ENCODE measurements at regions of chr10 and their contacts with region 1.

Region 1: DNA sequence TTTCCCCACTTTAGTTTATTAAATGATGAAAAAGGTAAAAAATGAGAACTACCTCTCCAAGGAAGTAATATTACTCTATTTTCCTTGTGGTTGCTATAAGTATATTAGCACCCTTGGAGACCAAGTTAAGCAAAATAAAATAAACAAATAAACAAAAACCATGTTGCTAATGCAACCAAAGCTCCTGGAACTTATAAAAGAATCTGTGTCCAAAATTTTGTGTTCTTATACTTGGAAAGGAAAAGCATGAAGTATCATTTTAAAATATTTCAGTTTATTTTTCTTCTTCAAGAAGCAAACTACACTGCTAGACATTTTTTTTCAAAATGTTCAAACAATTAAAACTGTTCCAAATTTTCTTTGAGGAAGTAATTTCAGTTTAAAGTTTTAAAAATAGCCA is 441.9 kb upstream of the LRRTM3 start:
- DNase-seq: no peak
- H3K4me3 ChIP-seq: no peak overlapping the region
- H3K27ac ChIP-seq: no peak overlapping the region
- H3K4me1 ChIP-seq: no peaks in the 10 kb centered on the region
- H3K27me3 ChIP-seq: no peaks in the 10 kb centered on the region
- CTCF ChIP-seq: no peak
- POLR2A ChIP-seq: no peak

Region 2: GRCh38 chr10:65762311-65762710 is 721.7 kb before region 1 on chr10:
- intact Hi-C with region 1: loop called (anchors 5 kb)
- DNase-seq: no peak
- H3K4me3 ChIP-seq: no peak overlapping the region
- H3K27ac ChIP-seq: no peak overlapping the region
- H3K4me1 ChIP-seq: no peaks in the 10 kb centered on the region
- H3K27me3 ChIP-seq: no peaks in the 10 kb centered on the region
- CTCF ChIP-seq: no peak
- POLR2A ChIP-seq: no peak

Measured in breast epithelium (tissue), 4 donors.